Breast epithelium (tissue), 4 donors: ENCODE measurements at regions of chr1 and their contacts with region 1.

Region 1: DNA sequence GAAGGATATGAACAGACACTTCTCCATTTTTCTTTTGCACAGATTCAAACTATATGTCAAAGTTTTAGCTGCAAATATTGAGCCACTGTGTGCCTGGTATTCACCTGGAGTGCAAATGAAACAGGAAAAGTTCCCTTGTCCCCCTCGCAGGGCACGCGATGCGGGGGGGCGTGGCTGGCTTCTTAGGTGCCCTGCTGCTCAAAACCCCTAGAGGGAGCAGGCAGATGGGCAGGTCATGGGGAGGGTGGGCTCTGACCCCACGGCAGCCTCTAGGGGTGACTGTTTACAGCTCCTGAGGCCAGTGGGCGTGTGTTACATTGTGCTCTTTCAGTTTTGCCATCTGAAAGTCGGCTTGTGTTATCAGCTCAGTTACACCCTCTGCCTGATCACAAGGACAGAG is 931.2 kb upstream of the B3GALT2 start:
- DNase-seq: no peak
- H3K4me3 ChIP-seq: no peak overlapping the region
- H3K27ac ChIP-seq: no peak overlapping the region
- H3K4me1 ChIP-seq: no peaks in the 10 kb centered on the region
- H3K27me3 ChIP-seq: no peaks in the 10 kb centered on the region
- CTCF ChIP-seq: no peak
- POLR2A ChIP-seq: no peak

Region 2: DNA sequence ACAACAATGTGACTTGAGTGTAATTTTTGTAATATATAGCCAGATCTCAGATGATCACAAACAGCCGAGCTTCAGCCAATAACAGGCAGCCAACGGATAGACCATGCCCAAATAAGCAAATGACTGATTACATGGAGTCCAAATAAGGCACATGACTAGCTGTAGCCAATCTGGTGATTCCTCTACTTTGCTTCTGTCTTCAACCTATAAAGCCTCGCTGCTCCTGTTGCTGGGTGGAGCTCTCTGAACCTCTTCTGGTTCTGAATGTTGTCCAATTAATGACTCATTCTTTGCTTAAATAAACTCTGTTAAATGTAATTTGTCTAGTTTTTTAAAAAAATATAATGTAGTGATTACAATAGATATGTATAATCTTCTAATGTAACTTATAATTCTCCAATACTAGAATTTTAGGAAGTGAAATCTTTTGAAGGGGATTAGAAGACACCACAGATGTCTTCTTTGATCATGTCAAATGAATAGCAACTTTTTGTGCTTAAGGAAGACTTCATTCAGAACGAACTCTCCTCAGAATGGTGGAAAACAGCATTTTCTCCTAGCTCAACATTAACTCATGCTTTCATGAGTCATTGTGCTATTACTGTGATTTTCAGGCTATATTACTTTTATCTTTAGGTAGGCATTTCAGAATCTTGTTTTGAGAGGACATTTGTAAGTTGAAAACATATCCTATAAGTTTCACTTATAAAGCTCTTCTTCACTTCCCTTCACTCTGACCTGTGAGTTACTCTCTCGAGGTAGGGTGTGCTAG is 73.4 kb before region 1 on chr1:
- intact Hi-C with region 1: loop called (anchors 2 kb)
- DNase-seq: no peak
- H3K4me3 ChIP-seq: no peak overlapping the region
- H3K27ac ChIP-seq: no peak overlapping the region
- H3K4me1 ChIP-seq: no peaks in the 10 kb centered on the region
- H3K27me3 ChIP-seq: no peaks in the 10 kb centered on the region
- CTCF ChIP-seq: no peak
- POLR2A ChIP-seq: no peak

Region 3: DNA sequence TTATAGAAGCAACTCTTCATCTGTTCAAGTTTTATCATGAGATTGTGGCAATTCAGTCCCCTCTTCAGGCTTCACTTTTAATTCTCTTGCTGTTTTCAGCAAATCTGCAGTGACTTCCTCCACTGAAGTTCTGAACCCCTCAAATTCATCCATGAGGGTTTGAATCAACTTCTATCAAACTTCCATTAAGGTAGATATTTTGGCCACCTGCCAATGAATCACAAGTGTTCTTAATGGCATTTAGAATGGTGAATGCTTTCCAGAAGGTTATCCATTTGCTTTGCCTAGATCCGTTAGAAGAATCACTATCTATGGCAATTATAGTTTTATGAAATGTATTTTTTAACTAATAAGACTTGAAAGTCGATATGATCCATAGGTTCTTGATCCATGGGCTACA is 15.6 kb after region 1 on chr1:
- intact Hi-C with region 1: no loop called
- DNase-seq: no peak
- H3K4me3 ChIP-seq: no peak overlapping the region
- H3K27ac ChIP-seq: no peak overlapping the region
- H3K4me1 ChIP-seq: no peaks in the 10 kb centered on the region
- H3K27me3 ChIP-seq: no peaks in the 10 kb centered on the region
- CTCF ChIP-seq: no peak
- POLR2A ChIP-seq: no peak

Region 4: DNA sequence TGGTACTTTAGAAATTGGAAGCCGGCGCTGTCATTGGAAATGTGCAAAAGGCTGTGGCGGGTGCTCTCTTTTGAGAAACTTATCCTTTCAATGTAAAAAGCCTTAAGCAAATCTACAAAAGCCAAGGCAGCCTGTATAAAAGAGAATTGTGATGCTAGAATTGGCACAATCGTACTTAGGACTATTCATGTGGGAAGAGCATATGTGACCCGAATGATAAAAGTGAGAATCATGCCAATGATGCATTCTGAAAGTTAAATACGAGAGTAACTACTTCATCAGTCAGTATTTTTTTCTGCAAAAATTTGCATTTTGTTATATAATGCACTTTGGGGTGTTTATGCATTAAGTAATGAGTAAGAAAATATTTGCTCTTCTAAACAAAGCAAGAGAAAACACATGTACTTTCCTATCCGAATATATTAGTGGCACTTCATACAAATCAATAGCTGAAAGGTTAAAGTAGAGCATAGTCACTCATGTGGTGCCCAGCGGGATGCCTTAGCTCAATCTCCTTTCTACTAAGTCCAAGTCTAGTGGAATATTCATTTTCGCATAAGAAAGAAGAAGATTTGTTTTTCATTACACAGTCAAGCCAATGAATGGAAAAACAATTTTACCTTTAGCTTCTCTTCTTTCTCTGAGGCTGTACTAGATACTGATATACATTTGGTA is 325.5 kb after region 1 on chr1:
- intact Hi-C with region 1: no loop called
- DNase-seq: no peak
- H3K4me3 ChIP-seq: no peak overlapping the region
- H3K27ac ChIP-seq: no peak overlapping the region
- H3K4me1 ChIP-seq: no peaks in the 10 kb centered on the region
- H3K27me3 ChIP-seq: no peaks in the 10 kb centered on the region
- CTCF ChIP-seq: no peak
- POLR2A ChIP-seq: no peak